ENCODE measurements at regions of chr3 and their contacts with region 1.

Region 1: DNA sequence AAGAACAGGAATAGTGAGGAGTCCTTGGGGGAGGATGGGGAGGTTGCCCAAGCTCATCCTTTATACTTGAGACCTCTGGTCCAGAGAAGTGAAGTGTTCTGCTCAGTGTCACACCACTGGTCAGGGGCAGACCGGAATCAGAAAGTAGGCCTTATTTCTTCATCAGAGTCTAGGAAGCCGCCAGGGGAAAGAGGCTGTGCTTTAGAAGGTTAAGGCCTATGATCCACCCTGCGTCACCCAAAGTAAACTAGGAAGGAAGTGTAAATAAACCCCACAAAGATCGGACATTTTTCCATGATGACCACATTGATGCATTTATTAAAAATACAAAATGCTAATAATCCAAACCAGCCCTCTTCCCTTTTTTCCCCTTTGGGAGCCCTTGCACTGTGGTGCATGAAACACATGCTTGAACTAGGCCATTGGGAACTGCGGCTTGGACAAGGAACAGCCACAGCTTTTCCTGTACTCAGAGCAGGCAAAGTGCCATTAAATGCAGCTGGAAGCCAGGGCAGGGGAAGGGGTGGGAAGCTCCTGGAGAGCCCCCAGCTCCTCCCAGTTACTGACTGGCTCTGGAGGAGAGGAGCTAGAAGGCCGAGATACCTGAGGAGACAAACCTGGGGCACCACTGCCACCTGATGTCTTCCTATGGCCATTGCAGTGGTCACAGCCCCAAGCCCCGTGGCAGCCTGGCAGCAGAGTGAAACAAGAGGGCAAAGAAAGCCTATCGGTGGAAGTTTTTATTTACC is 37.0 kb downstream of the CDC25A start:
- DNase-seq: peak; percentile 64 to 76
- H3K4me3 ChIP-seq: no peak overlapping the region
- H3K27ac ChIP-seq: peak overlapping the region; percentile 5 to 40
- H3K4me1 ChIP-seq: no peaks in the 10 kb centered on the region
- H3K27me3 ChIP-seq: no peaks in the 10 kb centered on the region
- CTCF ChIP-seq: peak; percentile 46 to 89 (median 85)
- POLR2A ChIP-seq: no peak

Region 2: GRCh38 chr3:47836986-47837385 is 314.2 kb before region 1 on chr3:
- intact Hi-C with region 1: loop called (anchors 5 kb)
- DNase-seq: no peak
- H3K4me3 ChIP-seq: no peak overlapping the region
- H3K27ac ChIP-seq: no peak overlapping the region
- H3K4me1 ChIP-seq: no peaks in the 10 kb centered on the region
- H3K27me3 ChIP-seq: no peaks in the 10 kb centered on the region
- CTCF ChIP-seq: no peak
- POLR2A ChIP-seq: no peak